ENCODE measurements at regions of chr19 and their contacts with region 1.

Region 1: DNA sequence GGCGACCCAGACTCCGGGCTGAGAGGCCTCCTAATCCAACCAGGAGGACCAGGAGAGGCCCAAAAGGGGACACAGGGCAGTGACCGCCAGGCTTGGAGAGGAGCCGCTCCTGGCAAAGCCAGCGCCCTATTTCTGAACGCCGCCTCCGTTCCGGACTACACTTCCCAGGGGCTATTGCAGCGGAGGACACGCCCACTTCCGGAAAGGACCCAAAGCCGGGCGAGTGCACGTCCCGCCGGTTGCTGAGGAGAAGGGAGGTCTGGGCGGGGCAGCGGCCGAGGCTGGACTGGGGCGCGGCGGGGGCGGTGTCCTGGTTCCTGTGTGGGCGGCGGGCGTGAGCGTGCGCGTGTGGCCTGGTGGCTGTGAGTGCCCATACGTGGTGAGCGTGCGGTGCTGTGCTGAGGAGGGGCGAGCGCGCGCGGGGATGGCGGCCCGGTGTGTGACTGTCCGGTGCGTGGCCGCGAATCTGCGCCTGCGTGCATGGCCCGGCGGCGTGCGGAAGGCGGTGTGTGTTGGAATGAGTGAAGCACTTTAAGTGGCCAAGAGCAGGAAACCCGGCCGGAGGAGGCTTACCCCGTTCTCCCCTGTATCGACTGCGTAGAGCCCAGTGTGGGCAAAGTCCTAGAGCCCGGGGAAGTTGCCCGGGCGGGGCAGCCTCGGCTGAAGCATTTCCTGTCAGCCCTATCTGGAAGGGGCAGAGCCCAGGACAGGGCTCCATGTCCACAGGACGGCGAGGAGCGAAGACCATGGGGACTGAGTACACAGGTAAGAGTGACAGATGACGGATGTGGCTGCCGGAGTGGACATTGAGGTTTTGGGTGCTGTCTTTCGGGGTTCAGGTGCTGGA is at the start of gene ZNF470:
- DNase-seq: peak; percentile 95 to 96
- ATAC-seq: peak; percentile 99 to 100 (median 99)
- H3K4me3 ChIP-seq: peak within 1 kb of the TSS; percentile 62 to 100 (median 93)
- H3K27ac ChIP-seq: peak within 1 kb of the TSS; percentile 31 to 96 (median 93)
- H3K4me1 ChIP-seq: peaks cover 0 to 19% (median 12%) of the 10 kb centered on the region in 9 donors
- H3K27me3 ChIP-seq: no peaks in the 10 kb centered on the region
- CTCF ChIP-seq: no peak
- total RNA-seq, gene ZNF470: 2.5 to 5.9 (median 4.9) TPM

Region 2: GRCh38 chr19:56507446-56508289 is 59.8 kb before region 1 on chr19 and contains the start of gene ZNF471:
- intact Hi-C with region 1: loop called in 1 of 10 experiments (anchors 2 kb)
- DNase-seq: peak; percentile 99
- ATAC-seq: peak; percentile 100
- H3K4me3 ChIP-seq: peak within 1 kb of the TSS; percentile 48 to 85 (median 71)
- H3K27ac ChIP-seq: peak within 1 kb of the TSS; percentile 93 to 99 (median 98)
- H3K4me1 ChIP-seq: peaks cover 0 to 17% (median 11%) of the 10 kb centered on the region in 9 donors
- H3K27me3 ChIP-seq: no peaks in the 10 kb centered on the region
- CTCF ChIP-seq: no peak
- total RNA-seq, gene ZNF471: 3.9 to 7.7 (median 5.5) TPM

Region 3: GRCh38 chr19:56538254-56538760 is 29.2 kb before region 1 on chr19:
- intact Hi-C with region 1: loop called in 2 of 10 experiments (anchors 1 to 2 kb)
- DNase-seq: peak; percentile 94 to 95
- ATAC-seq: peak; percentile 97 to 100 (median 99)
- H3K4me3 ChIP-seq: peak overlapping the region; percentile 59 to 93 (median 75)
- H3K27ac ChIP-seq: peak overlapping the region; percentile 87 to 99 (median 95)
- H3K4me1 ChIP-seq: peaks cover 0 to 22% (median 14%) of the 10 kb centered on the region in 9 donors
- H3K27me3 ChIP-seq: no peaks in the 10 kb centered on the region
- CTCF ChIP-seq: no peak

Region 4: DNA sequence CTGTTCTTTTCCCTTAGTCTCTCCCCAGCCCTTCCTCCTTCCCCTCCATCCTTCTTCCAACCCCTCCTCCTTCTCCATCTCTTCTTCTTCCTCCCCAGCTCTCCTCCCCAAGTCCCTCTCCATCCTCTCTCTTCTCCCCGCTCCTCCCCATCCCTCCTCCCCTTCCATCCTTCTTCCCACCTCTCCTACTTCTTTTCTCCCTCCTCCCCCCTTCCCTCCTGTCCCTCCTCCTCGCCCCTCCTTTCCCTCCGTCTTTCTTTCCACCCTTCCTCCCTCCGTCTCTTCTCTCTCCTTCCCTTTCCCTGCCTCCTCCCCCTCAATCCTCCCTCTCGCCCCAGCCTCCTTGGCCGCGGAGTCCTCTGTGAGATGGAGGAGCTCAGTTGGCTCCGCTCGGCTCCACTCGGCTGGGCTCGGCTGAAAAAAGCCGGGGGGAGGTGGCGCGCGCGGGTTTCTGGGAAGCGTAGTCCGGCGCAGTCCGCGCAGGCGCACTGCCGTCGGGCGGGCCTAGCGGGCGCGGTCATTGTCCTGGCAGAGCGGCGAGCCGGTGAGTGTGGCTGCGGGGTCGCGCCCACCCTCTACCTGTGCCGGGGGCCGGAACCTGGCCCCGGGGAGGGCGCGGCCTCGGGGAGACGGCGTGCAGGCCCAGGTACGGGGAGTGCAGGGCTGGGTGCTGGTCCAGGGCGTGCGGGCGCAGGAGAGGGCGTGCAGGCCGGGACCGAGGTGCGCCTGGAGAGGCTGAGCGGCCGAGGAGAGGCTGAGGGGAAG is 27.5 kb after region 1 on chr19 and contains the start of gene ZNF71:
- intact Hi-C with region 1: loop called in 1 of 10 experiments (anchors 1 kb)
- DNase-seq: peak; percentile 92 to 93
- ATAC-seq: peak; percentile 95 to 99 (median 98)
- H3K4me3 ChIP-seq: peak within 1 kb of the TSS; percentile 77 to 98 (median 90)
- H3K27ac ChIP-seq: peak within 1 kb of the TSS in 9 of 10 donors; percentile 70 to 88 (median 81)
- H3K4me1 ChIP-seq: peaks cover 0 to 28% (median 10%) of the 10 kb centered on the region in 9 donors
- H3K27me3 ChIP-seq: no peaks in the 10 kb centered on the region
- CTCF ChIP-seq: no peak
- total RNA-seq, gene ZNF71: 4.4 to 7.2 (median 6.1) TPM

Measured in heart right ventricle (tissue), 16 donors.